Caco-2 (cell line): ENCODE measurements at regions of chr6 and their contacts with region 1.

Region 1: GRCh38 chr6:113909234-113909856 is 52.2 kb downstream of the MARCKS start:
- DNase-seq: peak in 1 of 2 experiments; percentile 57
- H3K4me3 ChIP-seq: no peak overlapping the region
- H3K4me3 Mint-ChIP-seq: no peak overlapping the region
- H3K27ac Mint-ChIP-seq: no peak overlapping the region
- H3K4me1 ChIP-seq: peaks cover 5% of the 10 kb centered on the region; the same call in 1 of the 2 replicates
- H3K4me1 Mint-ChIP-seq: peaks cover 8% of the 10 kb centered on the region
- H3K27me3 ChIP-seq: no peaks in the 10 kb centered on the region
- H3K27me3 Mint-ChIP-seq: no peaks in the 10 kb centered on the region
- CTCF ChIP-seq: peak; percentile 38 to 73

Region 2: DNA sequence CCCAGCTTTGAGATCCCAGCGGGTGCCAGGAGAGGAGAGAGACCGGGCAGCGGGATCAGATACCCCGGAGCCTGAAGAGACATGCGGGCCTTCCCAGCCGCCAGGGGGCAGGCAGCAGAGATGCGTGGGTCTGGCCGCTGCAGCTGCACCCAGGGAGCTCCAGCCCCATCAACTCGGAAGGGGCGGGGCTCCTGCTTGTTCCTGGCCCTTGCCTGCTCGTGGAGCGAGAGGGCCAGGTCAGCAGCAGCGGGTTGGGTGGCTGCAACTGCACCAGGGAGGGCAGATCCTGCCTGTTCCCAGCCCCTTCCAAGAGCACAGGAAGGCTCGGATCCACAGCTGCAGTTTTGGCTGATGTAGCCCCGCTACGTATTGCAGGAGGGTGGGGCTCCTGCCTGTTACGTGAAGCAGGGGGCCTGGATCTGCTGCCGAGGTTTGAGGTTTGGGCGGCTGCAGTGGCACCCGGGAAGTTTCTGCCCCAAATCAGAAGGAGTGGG is 1029.4 kb before region 1 on chr6:
- CTCF ChIA-PET with region 1: interaction called, 4 read pairs
- POLR2A ChIA-PET with region 1: no interaction called
- intact Hi-C with region 1: loop called (anchors 1 kb)
- DNase-seq: peak; percentile 76 to 80
- H3K4me3 ChIP-seq: peak overlapping the region; percentile 56
- H3K4me3 Mint-ChIP-seq: peak overlapping the region; percentile 64
- H3K27ac Mint-ChIP-seq: no peak overlapping the region
- H3K4me1 ChIP-seq: peaks cover 5% of the 10 kb centered on the region; the same call in 1 of the 2 replicates
- H3K4me1 Mint-ChIP-seq: no peaks in the 10 kb centered on the region
- H3K27me3 ChIP-seq: no peaks in the 10 kb centered on the region
- H3K27me3 Mint-ChIP-seq: no peaks in the 10 kb centered on the region
- CTCF ChIP-seq: peak; percentile 55 to 69

Region 3: GRCh38 chr6:113137426-113137825 is 771.9 kb before region 1 on chr6:
- CTCF ChIA-PET with region 1: interaction called, 3 read pairs
- POLR2A ChIA-PET with region 1: no interaction called
- intact Hi-C with region 1: loop called (anchors 10 kb)
- DNase-seq: no peak
- H3K4me3 ChIP-seq: no peak overlapping the region
- H3K4me3 Mint-ChIP-seq: no peak overlapping the region
- H3K27ac Mint-ChIP-seq: no peak overlapping the region
- H3K4me1 ChIP-seq: no peaks in the 10 kb centered on the region
- H3K4me1 Mint-ChIP-seq: no peaks in the 10 kb centered on the region
- H3K27me3 ChIP-seq: no peaks in the 10 kb centered on the region
- H3K27me3 Mint-ChIP-seq: peaks cover 6% of the 10 kb centered on the region
- CTCF ChIP-seq: no peak

Region 4: GRCh38 chr6:113732384-113732966 is 176.9 kb before region 1 on chr6:
- CTCF ChIA-PET with region 1: no interaction called
- POLR2A ChIA-PET with region 1: no interaction called
- intact Hi-C with region 1: no loop called
- DNase-seq: peak in 1 of 2 experiments; percentile 8
- H3K4me3 ChIP-seq: no peak overlapping the region
- H3K4me3 Mint-ChIP-seq: no peak overlapping the region
- H3K27ac Mint-ChIP-seq: no peak overlapping the region
- H3K4me1 ChIP-seq: peaks cover 8% of the 10 kb centered on the region
- H3K4me1 Mint-ChIP-seq: peaks cover 20% of the 10 kb centered on the region
- H3K27me3 ChIP-seq: no peaks in the 10 kb centered on the region
- H3K27me3 Mint-ChIP-seq: no peaks in the 10 kb centered on the region
- CTCF ChIP-seq: peak in 1 of 2 experiments; percentile 27

Region 5: GRCh38 chr6:114267897-114268296 is 358.6 kb after region 1 on chr6:
- CTCF ChIA-PET with region 1: no interaction called
- POLR2A ChIA-PET with region 1: no interaction called
- intact Hi-C with region 1: no loop called
- DNase-seq: no peak
- H3K4me3 ChIP-seq: no peak overlapping the region
- H3K4me3 Mint-ChIP-seq: no peak overlapping the region
- H3K27ac Mint-ChIP-seq: no peak overlapping the region
- H3K4me1 ChIP-seq: peaks cover 10% of the 10 kb centered on the region
- H3K4me1 Mint-ChIP-seq: no peaks in the 10 kb centered on the region
- H3K27me3 ChIP-seq: no peaks in the 10 kb centered on the region; the same call in none of the 2 replicates
- H3K27me3 Mint-ChIP-seq: peaks cover 3% of the 10 kb centered on the region
- CTCF ChIP-seq: no peak